ENCODE measurements at regions of chr5 and their contacts with region 1.

Region 1: GRCh38 chr5:36866174-36866573 is 10.4 kb upstream of the NIPBL start:
- DNase-seq: no peak
- H3K4me3 ChIP-seq: no peak overlapping the region
- H3K27ac ChIP-seq: no peak overlapping the region
- H3K4me1 ChIP-seq: no peaks in the 10 kb centered on the region
- H3K27me3 ChIP-seq: no peaks in the 10 kb centered on the region
- CTCF ChIP-seq: no peak
- EP300 ChIP-seq: no peak
- POLR2A ChIP-seq: no peak

Region 2: DNA sequence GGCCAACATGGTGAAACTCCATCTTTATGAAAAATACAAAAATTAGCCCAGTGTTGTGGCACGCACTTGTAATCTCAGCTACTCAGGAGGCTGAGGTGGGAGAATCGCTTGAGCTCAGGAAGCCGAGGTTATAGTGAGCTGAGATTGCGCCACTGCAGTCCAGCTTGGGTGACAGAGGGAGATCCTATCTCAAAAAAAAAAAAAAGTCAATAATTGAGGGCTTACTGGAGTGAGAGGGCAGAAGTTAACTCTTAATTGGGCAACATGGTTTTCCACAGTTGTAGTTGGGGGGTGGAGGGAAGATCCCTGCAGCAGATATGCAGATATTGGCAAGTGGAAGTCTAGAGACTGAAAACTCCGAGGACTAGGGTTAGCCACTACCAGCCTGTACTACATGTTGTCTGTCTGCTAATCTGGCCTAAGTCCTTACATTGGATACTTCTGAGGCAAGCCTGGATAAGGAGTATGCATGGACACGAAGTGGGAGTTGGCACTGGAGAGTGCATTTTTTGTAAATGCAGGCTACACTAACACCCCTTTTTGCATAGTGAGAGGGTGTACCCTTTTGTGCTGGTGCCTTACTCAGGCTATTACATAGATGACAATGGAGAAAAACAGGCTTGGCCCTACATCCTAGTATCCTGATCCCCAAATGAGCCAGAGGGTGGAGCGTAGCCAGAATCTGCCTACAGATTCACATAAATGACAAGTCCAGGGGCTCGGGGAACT is 78.6 kb before region 1 on chr5:
- intact Hi-C with region 1: loop called in 1 of 4 experiments (anchors 10 kb)
- DNase-seq: no peak
- H3K4me3 ChIP-seq: no peak overlapping the region
- H3K27ac ChIP-seq: no peak overlapping the region
- H3K4me1 ChIP-seq: peaks cover 4% of the 10 kb centered on the region
- H3K27me3 ChIP-seq: no peaks in the 10 kb centered on the region
- CTCF ChIP-seq: no peak
- EP300 ChIP-seq: no peak
- POLR2A ChIP-seq: no peak

Region 3: GRCh38 chr5:36820900-36821299 is 45.3 kb before region 1 on chr5:
- intact Hi-C with region 1: no loop called
- DNase-seq: no peak
- H3K4me3 ChIP-seq: no peak overlapping the region
- H3K27ac ChIP-seq: no peak overlapping the region
- H3K4me1 ChIP-seq: no peaks in the 10 kb centered on the region
- H3K27me3 ChIP-seq: no peaks in the 10 kb centered on the region
- CTCF ChIP-seq: no peak
- EP300 ChIP-seq: no peak
- POLR2A ChIP-seq: no peak

Measured in ovary (tissue), 10 donors.